Posterior vena cava (tissue), 2 donors: ENCODE measurements at regions of chr1 and their contacts with region 1.

Region 1: DNA sequence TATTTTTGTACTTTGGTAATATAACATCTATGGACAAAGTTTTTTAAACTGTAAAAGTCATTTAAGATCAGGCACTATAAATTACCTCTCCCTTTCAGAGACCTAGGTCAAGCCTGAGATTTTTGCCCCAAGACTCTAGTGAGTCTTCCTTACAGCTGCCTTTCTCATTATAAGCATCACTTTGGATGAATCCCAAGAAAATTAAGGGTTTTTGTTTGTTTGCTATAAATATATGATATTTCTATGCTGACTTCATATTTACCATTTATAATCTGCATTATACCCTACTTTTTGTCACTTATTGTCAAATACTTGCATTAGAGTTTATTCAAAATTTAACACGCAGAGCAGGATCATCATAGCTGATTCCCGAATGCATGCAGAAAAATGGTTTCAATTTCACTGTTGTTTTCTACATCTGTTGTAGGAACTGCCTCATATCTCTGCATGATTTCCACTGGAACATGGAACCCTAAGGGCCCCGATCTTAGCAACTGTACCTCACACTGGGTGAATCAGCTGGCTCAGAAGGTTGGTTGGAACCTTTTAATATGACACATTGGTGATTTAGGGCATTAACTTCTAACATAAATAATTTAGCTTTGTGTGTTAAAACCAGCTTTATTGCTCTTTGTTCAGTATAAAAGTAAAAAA is 150.0 kb downstream of the ADGRL2 start:
- DNase-seq: no peak

Region 2: DNA sequence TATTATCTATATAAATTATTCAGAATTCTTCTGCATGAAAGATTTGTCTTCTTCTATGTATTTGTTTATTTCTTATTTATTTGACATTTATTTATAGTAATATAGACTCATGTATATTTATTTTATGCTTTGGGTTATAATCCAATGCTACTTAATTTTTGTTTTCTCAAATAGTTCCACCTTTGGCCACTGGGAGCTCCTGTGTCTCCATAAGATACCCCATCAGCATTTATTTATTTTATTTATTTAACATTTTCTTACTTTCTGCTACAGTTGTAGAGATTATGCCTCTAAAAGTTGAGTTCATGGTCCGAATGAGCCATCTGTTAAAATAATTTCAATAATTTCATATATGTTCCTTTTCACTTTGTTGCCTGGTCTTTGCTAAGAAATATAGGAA is 139.4 kb after region 1 on chr1:
- intact Hi-C with region 1: no loop called
- DNase-seq: no peak

Region 3: GRCh38 chr1:82287556-82287955 is 336.8 kb after region 1 on chr1:
- intact Hi-C with region 1: loop called in 1 of 2 experiments (anchors 5 kb)
- DNase-seq: no peak